ENCODE measurements at regions of chr10 and their contacts with region 1.

Region 1: GRCh38 chr10:27155066-27155754 is at the start of gene MASTL:
- DNase-seq: peak; percentile 88 to 98 (median 93)
- ATAC-seq: peak; percentile 77
- H3K4me3 ChIP-seq: peak within 1 kb of the TSS; percentile 97
- H3K4me3 Mint-ChIP-seq: peak within 1 kb of the TSS; percentile 97
- H3K27ac ChIP-seq: peak within 1 kb of the TSS; percentile 100
- H3K27ac Mint-ChIP-seq: peak within 1 kb of the TSS; percentile 100
- H3K4me1 ChIP-seq: peaks cover 31% of the 10 kb centered on the region
- H3K4me1 Mint-ChIP-seq: peaks cover 53% of the 10 kb centered on the region
- H3K27me3 ChIP-seq: no peaks in the 10 kb centered on the region
- H3K27me3 Mint-ChIP-seq: no peaks in the 10 kb centered on the region
- CTCF ChIP-seq: no peak
- total RNA-seq, gene MASTL: 24.2 to 25.1 TPM

Region 2: GRCh38 chr10:25701652-25702051 is 1453.6 kb before region 1 on chr10:
- CTCF ChIA-PET with region 1: no interaction called
- POLR2A ChIA-PET with region 1: no interaction called
- intact Hi-C with region 1: no loop called
- DNase-seq: no peak
- ATAC-seq: no peak
- H3K4me3 ChIP-seq: no peak overlapping the region
- H3K4me3 Mint-ChIP-seq: no peak overlapping the region
- H3K27ac ChIP-seq: no peak overlapping the region
- H3K27ac Mint-ChIP-seq: no peak overlapping the region
- H3K4me1 ChIP-seq: no peaks in the 10 kb centered on the region
- H3K4me1 Mint-ChIP-seq: no peaks in the 10 kb centered on the region
- H3K27me3 ChIP-seq: no peaks in the 10 kb centered on the region
- H3K27me3 Mint-ChIP-seq: no peaks in the 10 kb centered on the region
- CTCF ChIP-seq: no peak

Region 3: GRCh38 chr10:25952857-25953256 is 1202.4 kb before region 1 on chr10:
- CTCF ChIA-PET with region 1: no interaction called
- POLR2A ChIA-PET with region 1: no interaction called
- intact Hi-C with region 1: no loop called
- DNase-seq: no peak
- ATAC-seq: no peak
- H3K4me3 ChIP-seq: no peak overlapping the region
- H3K4me3 Mint-ChIP-seq: no peak overlapping the region
- H3K27ac ChIP-seq: no peak overlapping the region
- H3K27ac Mint-ChIP-seq: no peak overlapping the region
- H3K4me1 ChIP-seq: no peaks in the 10 kb centered on the region
- H3K4me1 Mint-ChIP-seq: no peaks in the 10 kb centered on the region
- H3K27me3 ChIP-seq: no peaks in the 10 kb centered on the region
- H3K27me3 Mint-ChIP-seq: peaks cover 2% of the 10 kb centered on the region
- CTCF ChIP-seq: no peak

Region 4: GRCh38 chr10:26697163-26697921 is 457.9 kb before region 1 on chr10 and contains the start of gene PDSS1:
- CTCF ChIA-PET with region 1: no interaction called
- POLR2A ChIA-PET with region 1: interaction called, 7 read pairs
- intact Hi-C with region 1: loop called in 1 of 2 experiments (anchors 5 kb)
- DNase-seq: peak; percentile 29 to 77 (median 52)
- ATAC-seq: peak; percentile 65
- H3K4me3 ChIP-seq: peak within 1 kb of the TSS; percentile 69
- H3K4me3 Mint-ChIP-seq: peak within 1 kb of the TSS; percentile 96
- H3K27ac ChIP-seq: peak within 1 kb of the TSS; percentile 53 to 75
- H3K27ac Mint-ChIP-seq: peak within 1 kb of the TSS; percentile 92
- H3K4me1 ChIP-seq: peaks cover 18% of the 10 kb centered on the region
- H3K4me1 Mint-ChIP-seq: peaks cover 38% of the 10 kb centered on the region
- H3K27me3 ChIP-seq: no peaks in the 10 kb centered on the region
- H3K27me3 Mint-ChIP-seq: no peaks in the 10 kb centered on the region
- CTCF ChIP-seq: no peak
- total RNA-seq, gene PDSS1: 3.8 to 4.5 TPM

Region 5: GRCh38 chr10:27111277-27111676 is 43.9 kb before region 1 on chr10:
- CTCF ChIA-PET with region 1: no interaction called
- POLR2A ChIA-PET with region 1: interaction called, 4 read pairs
- intact Hi-C with region 1: loop called (anchors 5 kb)
- DNase-seq: no peak
- ATAC-seq: no peak
- H3K4me3 ChIP-seq: no peak overlapping the region
- H3K4me3 Mint-ChIP-seq: no peak overlapping the region
- H3K27ac ChIP-seq: no peak overlapping the region
- H3K27ac Mint-ChIP-seq: no peak overlapping the region
- H3K4me1 ChIP-seq: no peaks in the 10 kb centered on the region
- H3K4me1 Mint-ChIP-seq: peaks cover 3% of the 10 kb centered on the region
- H3K27me3 ChIP-seq: no peaks in the 10 kb centered on the region
- H3K27me3 Mint-ChIP-seq: no peaks in the 10 kb centered on the region
- CTCF ChIP-seq: no peak

Region 6: GRCh38 chr10:27241652-27242472 is 86.7 kb after region 1 on chr10:
- CTCF ChIA-PET with region 1: interaction called, 4 read pairs
- POLR2A ChIA-PET with region 1: interaction called, 123 read pairs
- intact Hi-C with region 1: loop called (anchors 1 kb)
- DNase-seq: peak; percentile 70 to 95 (median 84)
- ATAC-seq: peak; percentile 61
- H3K4me3 ChIP-seq: peak overlapping the region; percentile 92
- H3K4me3 Mint-ChIP-seq: peak overlapping the region; percentile 88
- H3K27ac ChIP-seq: peak overlapping the region; percentile 85 to 97
- H3K27ac Mint-ChIP-seq: peak overlapping the region; percentile 94
- H3K4me1 ChIP-seq: peaks cover 35% of the 10 kb centered on the region
- H3K4me1 Mint-ChIP-seq: peaks cover 50% of the 10 kb centered on the region
- H3K27me3 ChIP-seq: no peaks in the 10 kb centered on the region
- H3K27me3 Mint-ChIP-seq: no peaks in the 10 kb centered on the region
- CTCF ChIP-seq: peak; percentile 49

Region 7: DNA sequence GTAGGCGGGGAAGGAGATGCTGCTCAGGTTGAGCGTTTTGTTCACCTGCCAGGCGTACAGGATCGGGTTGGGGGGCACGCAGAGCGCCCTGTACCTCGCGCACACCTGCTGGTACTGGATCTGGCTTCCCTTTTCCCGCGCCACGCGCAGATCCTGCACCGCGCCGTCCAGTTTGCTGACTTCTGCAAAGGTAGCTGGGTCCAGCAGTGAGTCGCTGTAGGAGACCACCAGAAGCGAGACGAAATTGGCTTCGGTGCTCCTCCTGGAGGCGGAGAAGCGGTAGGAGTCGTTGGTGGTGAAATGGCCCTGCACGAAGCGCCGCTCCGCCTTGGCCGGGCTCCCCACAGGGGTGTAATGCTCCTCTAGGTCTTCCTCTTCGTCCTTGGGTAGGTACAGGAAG is 258.2 kb after region 1 on chr10:
- CTCF ChIA-PET with region 1: no interaction called
- POLR2A ChIA-PET with region 1: no interaction called
- intact Hi-C with region 1: no loop called
- DNase-seq: no peak
- ATAC-seq: no peak
- H3K4me3 ChIP-seq: no peak overlapping the region
- H3K4me3 Mint-ChIP-seq: no peak overlapping the region
- H3K27ac ChIP-seq: no peak overlapping the region
- H3K27ac Mint-ChIP-seq: no peak overlapping the region
- H3K4me1 ChIP-seq: no peaks in the 10 kb centered on the region
- H3K4me1 Mint-ChIP-seq: no peaks in the 10 kb centered on the region
- H3K27me3 ChIP-seq: peaks cover 15 to 18% of the 10 kb centered on the region in 2 experiments
- H3K27me3 Mint-ChIP-seq: peaks cover 47% of the 10 kb centered on the region
- CTCF ChIP-seq: no peak

Region 8: GRCh38 chr10:27504007-27504807 is 349.0 kb after region 1 on chr10 and contains the start of gene RAB18:
- CTCF ChIA-PET with region 1: no interaction called
- POLR2A ChIA-PET with region 1: interaction called, 27 read pairs
- intact Hi-C with region 1: loop called in 1 of 2 experiments (anchors 5 kb)
- DNase-seq: peak; percentile 95 to 100 (median 98)
- ATAC-seq: peak; percentile 95
- H3K4me3 ChIP-seq: peak within 1 kb of the TSS; percentile 74
- H3K4me3 Mint-ChIP-seq: peak within 1 kb of the TSS; percentile 99
- H3K27ac ChIP-seq: peak within 1 kb of the TSS; percentile 68 to 76
- H3K27ac Mint-ChIP-seq: peak within 1 kb of the TSS; percentile 97
- H3K4me1 ChIP-seq: peaks cover 31% of the 10 kb centered on the region
- H3K4me1 Mint-ChIP-seq: peaks cover 60% of the 10 kb centered on the region
- H3K27me3 ChIP-seq: no peaks in the 10 kb centered on the region
- H3K27me3 Mint-ChIP-seq: no peaks in the 10 kb centered on the region
- CTCF ChIP-seq: no peak
- total RNA-seq, gene RAB18: 120 to 130 TPM

Region 9: GRCh38 chr10:28532383-28533175 is 1377.4 kb after region 1 on chr10 and contains the start of gene WAC:
- CTCF ChIA-PET with region 1: no interaction called
- POLR2A ChIA-PET with region 1: interaction called, 15 read pairs
- intact Hi-C with region 1: loop called in 1 of 2 experiments (anchors 10 kb)
- DNase-seq: peak; percentile 93 to 98 (median 97)
- ATAC-seq: peak; percentile 81
- H3K4me3 ChIP-seq: peak within 1 kb of the TSS; percentile 98
- H3K4me3 Mint-ChIP-seq: peak within 1 kb of the TSS; percentile 100
- H3K27ac ChIP-seq: peak within 1 kb of the TSS; percentile 99
- H3K27ac Mint-ChIP-seq: peak within 1 kb of the TSS; percentile 98
- H3K4me1 ChIP-seq: peaks cover 22% of the 10 kb centered on the region
- H3K4me1 Mint-ChIP-seq: peaks cover 73% of the 10 kb centered on the region
- H3K27me3 ChIP-seq: no peaks in the 10 kb centered on the region
- H3K27me3 Mint-ChIP-seq: no peaks in the 10 kb centered on the region
- CTCF ChIP-seq: peak; percentile 30
- total RNA-seq, gene WAC: 169 to 177 TPM